Endothelial cell of umbilical vein (primary cell): ENCODE measurements at regions of chr19 and their contacts with region 1.

Region 1: GRCh38 chr19:33235269-33235995 is 9.8 kb upstream of the SLC7A10 start:
- DNase-seq: peak; percentile 57
- H3K4me3 ChIP-seq: no peak overlapping the region
- H3K27ac ChIP-seq: no peak overlapping the region
- H3K4me1 ChIP-seq: no peaks in the 10 kb centered on the region
- H3K27me3 ChIP-seq: no peaks in the 10 kb centered on the region
- CTCF ChIP-seq: peak; percentile 84 to 89
- POLR2A ChIP-seq: no peak

Region 2: DNA sequence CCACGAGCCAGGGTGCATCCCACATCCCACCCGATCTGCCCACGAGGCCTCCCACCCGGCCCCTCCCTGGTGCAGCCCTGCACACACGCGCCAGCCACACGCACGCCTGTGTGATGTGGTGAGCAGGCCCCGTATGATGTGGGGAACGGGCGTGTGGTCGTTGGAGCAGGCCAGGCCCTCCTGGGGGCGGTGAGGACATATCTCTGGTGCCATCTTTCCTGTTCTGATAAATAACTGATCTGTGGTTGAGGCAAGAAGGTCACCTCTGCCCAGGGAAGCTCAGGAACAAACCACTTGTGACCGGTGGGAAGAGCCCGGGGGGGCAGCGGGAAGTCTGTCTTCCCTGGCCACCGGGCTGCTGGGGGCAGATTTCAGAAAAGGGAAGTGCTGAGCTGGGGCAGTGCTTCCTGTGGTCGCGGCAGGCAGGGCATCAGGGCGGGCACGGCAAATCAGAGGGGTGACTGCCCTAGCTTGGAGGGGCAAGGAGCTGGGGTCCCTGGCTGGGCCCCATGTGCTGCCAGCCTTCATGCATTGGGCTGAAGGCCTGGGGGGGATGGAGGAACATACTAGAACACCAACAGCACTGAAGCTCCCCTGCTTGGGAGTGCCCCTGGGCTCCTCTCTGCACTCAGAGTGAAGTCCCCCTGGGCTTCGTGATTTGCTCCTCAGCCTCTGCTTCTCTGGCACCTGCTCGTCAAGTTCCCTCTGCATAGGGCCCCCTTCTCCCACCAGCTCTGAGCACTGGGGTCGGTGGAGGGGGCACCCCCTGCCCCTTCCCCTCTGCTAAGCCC is 25.4 kb after region 1 on chr19:
- CTCF ChIA-PET with region 1: interaction called, 20 read pairs
- POLR2A ChIA-PET with region 1: no interaction called
- dilution Hi-C with region 1: no loop called
- intact Hi-C with region 1: no loop called
- DNase-seq: no peak
- H3K4me3 ChIP-seq: no peak overlapping the region
- H3K27ac ChIP-seq: no peak overlapping the region
- H3K4me1 ChIP-seq: no peaks in the 10 kb centered on the region
- H3K27me3 ChIP-seq: no peaks in the 10 kb centered on the region
- CTCF ChIP-seq: no peak
- POLR2A ChIP-seq: no peak

Region 3: DNA sequence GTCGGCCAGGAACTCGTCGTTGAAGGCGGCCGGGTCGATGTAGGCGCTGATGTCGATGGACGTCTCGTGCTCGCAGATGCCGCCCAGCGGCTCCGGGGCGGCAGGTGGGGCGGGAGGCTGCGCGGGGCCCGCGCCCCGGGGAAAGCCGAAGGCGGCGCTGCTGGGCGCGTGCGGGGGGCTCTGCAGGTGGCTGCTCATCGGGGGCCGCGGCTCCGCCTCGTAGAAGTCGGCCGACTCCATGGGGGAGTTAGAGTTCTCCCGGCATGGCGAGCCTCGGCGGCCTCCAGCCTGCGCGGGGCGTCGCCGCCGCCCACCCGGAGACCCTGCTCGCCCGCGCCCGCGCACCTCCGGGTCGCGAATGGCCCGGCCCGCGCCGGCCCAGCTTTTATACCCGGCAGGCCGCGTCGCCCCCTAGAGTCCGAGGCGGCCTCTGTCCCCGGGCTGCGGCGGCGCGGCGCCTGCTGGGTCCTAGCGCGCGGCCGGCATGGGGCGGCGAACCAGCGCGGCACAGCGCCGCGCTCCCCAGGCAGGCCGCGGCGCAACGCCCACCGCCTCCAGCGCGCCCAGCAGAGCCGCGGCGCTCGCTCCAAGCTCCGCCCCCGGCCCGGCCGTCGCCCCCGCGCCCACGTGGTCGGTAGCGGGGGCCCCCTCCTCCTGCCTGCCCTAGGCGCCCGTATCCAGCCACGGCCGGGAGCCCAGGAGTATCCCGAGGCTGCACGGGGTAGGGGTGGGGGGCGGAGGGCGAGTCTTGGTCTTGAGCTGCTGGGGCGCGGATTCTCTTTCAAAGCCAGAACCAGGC is 66.9 kb after region 1 on chr19 and contains the start of gene CEBPA:
- CTCF ChIA-PET with region 1: interaction called, 13 read pairs
- POLR2A ChIA-PET with region 1: no interaction called
- dilution Hi-C with region 1: no loop called
- intact Hi-C with region 1: loop called (anchors 2 kb)
- DNase-seq: peak; percentile 60
- H3K4me3 ChIP-seq: peak within 1 kb of the TSS; percentile 40 to 64 (median 58)
- H3K27ac ChIP-seq: no peak within 1 kb of the TSS
- H3K4me1 ChIP-seq: peaks cover 9% of the 10 kb centered on the region
- H3K27me3 ChIP-seq: peaks cover 25 to 46% of the 10 kb centered on the region in 2 experiments
- CTCF ChIP-seq: peak; percentile 42 to 52
- POLR2A ChIP-seq: no peak
- total RNA-seq, gene CEBPA: not detected in 2 replicates

Region 4: GRCh38 chr19:33394006-33394849 is 158.8 kb after region 1 on chr19:
- CTCF ChIA-PET with region 1: interaction called, 17 read pairs
- POLR2A ChIA-PET with region 1: no interaction called
- dilution Hi-C with region 1: no loop called
- intact Hi-C with region 1: no loop called
- DNase-seq: no peak
- H3K4me3 ChIP-seq: no peak overlapping the region
- H3K27ac ChIP-seq: no peak overlapping the region
- H3K4me1 ChIP-seq: peaks cover 19% of the 10 kb centered on the region
- H3K27me3 ChIP-seq: no peaks in the 10 kb centered on the region
- CTCF ChIP-seq: no peak
- POLR2A ChIP-seq: no peak

Region 5: DNA sequence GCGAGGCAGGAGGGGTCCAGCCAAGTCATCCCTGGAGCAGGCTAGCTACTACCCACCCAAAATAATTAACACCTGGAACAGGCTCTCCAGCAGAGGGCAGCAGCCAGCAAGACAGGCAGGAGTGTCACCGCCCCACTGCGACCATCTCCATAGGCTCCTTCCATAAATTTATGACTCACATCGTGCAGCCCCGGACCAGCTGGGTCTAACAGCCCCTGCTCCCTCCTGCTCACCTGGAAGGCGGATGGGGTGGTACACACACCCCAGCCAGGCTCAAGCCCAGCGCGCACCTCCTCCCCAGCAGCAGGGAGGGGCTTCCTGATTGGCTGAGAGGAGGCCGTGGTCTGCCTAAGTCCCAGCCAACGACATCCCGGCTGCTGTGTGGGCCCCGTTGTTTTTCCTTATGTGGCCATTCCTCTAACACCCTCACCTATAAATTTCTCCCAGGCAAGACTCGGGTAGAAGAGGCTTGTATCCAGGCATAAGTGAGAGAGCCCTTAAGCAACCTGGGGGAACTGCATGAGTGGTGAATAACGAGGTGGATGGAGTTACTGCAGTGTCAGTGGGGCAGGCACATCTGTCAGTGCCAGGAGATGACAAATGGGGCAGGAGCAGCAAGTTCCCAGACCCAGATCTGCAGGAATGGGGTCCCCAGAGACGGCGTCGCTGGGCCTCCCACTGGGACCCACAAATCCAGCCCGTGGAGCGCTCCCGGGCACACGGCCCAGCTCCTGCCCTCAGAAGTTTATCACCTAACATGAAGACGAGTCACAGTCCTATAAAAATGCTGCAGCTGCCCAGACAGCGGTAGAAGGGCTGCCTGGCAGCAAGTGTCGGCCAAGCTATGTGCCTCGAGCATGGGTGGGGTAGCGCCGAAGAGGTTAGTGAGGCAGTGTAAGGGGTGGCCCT is 181.1 kb after region 1 on chr19:
- CTCF ChIA-PET with region 1: interaction called, 19 read pairs
- POLR2A ChIA-PET with region 1: no interaction called
- dilution Hi-C with region 1: no loop called
- intact Hi-C with region 1: no loop called
- DNase-seq: peak; percentile 62
- H3K4me3 ChIP-seq: no peak overlapping the region
- H3K27ac ChIP-seq: no peak overlapping the region
- H3K4me1 ChIP-seq: no peaks in the 10 kb centered on the region
- H3K27me3 ChIP-seq: no peaks in the 10 kb centered on the region
- CTCF ChIP-seq: peak; percentile 72 to 79
- POLR2A ChIP-seq: no peak

Region 6: DNA sequence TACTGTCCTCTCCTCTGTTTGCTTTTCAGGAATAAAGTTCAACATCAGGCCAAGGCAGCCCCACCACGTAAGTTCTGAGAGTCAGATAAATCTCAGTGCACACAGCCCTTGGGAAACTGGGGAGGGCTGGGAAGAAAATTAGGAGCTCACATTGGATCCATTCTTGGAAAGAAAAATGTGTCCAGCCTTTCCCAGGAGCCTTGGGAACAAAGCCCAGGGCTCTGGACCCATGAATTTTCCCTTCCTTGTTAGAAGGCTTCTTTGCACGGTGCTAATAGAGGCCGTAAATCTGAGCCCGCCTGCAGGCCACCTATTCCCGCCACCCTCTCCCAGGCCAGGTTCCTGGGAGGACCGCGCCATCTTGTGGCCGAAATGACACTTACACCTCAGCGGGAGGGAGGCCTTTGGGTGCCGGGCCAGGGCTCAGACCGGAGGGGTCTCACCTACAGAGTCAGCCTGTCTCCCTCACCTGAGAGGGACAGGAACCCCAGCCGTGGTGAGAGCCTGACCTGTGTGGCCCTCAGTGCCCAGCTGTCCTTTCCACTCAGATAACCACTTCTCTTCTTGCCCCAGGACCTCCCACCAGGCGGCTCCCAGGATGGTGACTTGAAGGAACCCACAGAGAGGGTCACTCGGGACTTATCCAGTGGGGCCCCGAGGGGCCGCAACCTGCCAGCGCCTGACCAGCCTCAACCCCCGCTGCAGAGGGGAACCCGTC is 536.1 kb after region 1 on chr19:
- CTCF ChIA-PET with region 1: interaction called, 34 read pairs
- POLR2A ChIA-PET with region 1: no interaction called
- dilution Hi-C with region 1: no loop called
- intact Hi-C with region 1: loop called (anchors 1 kb)
- DNase-seq: peak; percentile 51
- H3K4me3 ChIP-seq: no peak overlapping the region
- H3K27ac ChIP-seq: no peak overlapping the region
- H3K4me1 ChIP-seq: no peaks in the 10 kb centered on the region
- H3K27me3 ChIP-seq: no peaks in the 10 kb centered on the region
- CTCF ChIP-seq: peak; percentile 76 to 82
- POLR2A ChIP-seq: no peak